Posterior vena cava (tissue), 2 donors: ENCODE measurements at regions of chr11 and their contacts with region 1.

Region 1: DNA sequence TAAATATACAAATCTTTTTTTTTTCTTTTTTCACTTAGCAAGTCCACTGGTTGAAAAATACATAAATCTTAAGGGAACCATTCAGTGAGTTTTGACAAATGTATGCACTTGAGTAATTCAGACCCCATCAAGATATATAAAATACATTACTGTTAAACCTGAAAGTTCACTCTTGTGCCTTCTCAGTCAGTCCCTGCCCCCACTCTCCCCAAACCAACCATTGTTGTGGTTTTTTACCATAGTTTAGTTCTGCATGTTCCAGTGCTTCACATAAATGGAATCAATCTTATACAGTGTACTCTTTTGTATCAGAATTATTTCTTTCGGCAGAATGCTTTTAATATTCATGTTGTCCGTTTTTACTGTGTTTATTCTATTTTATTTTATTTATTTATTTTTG is 26.1 kb downstream of the RNF214 start:
- DNase-seq: no peak

Region 2: DNA sequence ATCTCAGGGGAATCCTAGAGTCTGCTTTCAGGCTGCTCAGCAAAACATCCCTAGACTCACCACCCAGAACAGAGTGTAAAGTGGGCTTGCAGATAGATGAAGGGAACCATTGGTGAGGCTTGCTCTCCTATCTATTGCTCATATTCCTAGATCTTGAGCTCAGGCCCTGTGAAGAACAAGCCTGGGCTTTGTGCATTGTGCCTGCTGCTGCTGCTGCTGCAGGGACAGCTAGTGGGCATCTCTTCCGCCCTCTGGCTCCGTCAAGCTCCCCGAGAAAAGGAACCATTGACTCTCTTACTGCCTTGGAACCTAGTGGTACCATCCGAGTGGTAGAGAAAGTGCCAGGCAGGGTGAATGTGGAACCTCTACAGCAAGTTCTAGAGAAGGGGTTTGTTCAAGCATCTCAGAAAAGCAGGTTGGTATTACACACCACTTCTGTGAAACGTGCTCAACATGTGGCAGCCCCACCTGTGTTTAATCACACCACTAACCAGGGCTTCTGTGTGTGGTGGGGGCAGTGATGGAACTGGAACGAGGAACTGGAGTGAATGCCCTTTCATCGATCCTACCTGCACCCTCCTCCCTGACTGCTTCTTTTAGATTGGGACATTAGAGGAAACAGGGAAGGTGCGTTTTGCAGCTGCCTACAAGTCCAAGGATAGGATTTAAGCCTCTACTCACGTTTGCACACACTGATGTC is 37.0 kb after region 1 on chr11:
- intact Hi-C with region 1: loop called in 1 of 2 experiments (anchors 1 kb)
- DNase-seq: no peak